ENCODE measurements at regions of chr16 and their contacts with region 1.

Region 1: GRCh38 chr16:24253192-24253591 is 2.9 kb upstream of the CACNG3 start:
- DNase-seq: peak; percentile 71
- ATAC-seq: peak; percentile 66
- H3K4me3 ChIP-seq: no peak overlapping the region
- H3K4me3 Mint-ChIP-seq: no peak overlapping the region
- H3K27ac ChIP-seq: no peak overlapping the region
- H3K27ac Mint-ChIP-seq: no peak overlapping the region
- H3K4me1 ChIP-seq: no peaks in the 10 kb centered on the region
- H3K4me1 Mint-ChIP-seq: peaks cover 6% of the 10 kb centered on the region
- H3K27me3 ChIP-seq: peaks cover 0 to 44% (median 39%) of the 10 kb centered on the region in 4 experiments
- H3K27me3 Mint-ChIP-seq: peaks cover 51% of the 10 kb centered on the region
- CTCF ChIP-seq: peak; percentile 85

Region 2: GRCh38 chr16:23729503-23730424 is 523.4 kb before region 1 on chr16:
- CTCF ChIA-PET with region 1: interaction called, 59 read pairs
- POLR2A ChIA-PET with region 1: no interaction called
- intact Hi-C with region 1: no loop called
- DNase-seq: no peak
- ATAC-seq: no peak
- H3K4me3 ChIP-seq: no peak overlapping the region
- H3K4me3 Mint-ChIP-seq: no peak overlapping the region
- H3K27ac ChIP-seq: no peak overlapping the region
- H3K27ac Mint-ChIP-seq: no peak overlapping the region
- H3K4me1 ChIP-seq: peaks cover 0 to 5% of the 10 kb centered on the region in 2 donors
- H3K4me1 Mint-ChIP-seq: peaks cover 3% of the 10 kb centered on the region
- H3K27me3 ChIP-seq: peaks cover 0 to 6% (median 0%) of the 10 kb centered on the region in 4 experiments
- H3K27me3 Mint-ChIP-seq: peaks cover 15% of the 10 kb centered on the region
- CTCF ChIP-seq: no peak

Region 3: DNA sequence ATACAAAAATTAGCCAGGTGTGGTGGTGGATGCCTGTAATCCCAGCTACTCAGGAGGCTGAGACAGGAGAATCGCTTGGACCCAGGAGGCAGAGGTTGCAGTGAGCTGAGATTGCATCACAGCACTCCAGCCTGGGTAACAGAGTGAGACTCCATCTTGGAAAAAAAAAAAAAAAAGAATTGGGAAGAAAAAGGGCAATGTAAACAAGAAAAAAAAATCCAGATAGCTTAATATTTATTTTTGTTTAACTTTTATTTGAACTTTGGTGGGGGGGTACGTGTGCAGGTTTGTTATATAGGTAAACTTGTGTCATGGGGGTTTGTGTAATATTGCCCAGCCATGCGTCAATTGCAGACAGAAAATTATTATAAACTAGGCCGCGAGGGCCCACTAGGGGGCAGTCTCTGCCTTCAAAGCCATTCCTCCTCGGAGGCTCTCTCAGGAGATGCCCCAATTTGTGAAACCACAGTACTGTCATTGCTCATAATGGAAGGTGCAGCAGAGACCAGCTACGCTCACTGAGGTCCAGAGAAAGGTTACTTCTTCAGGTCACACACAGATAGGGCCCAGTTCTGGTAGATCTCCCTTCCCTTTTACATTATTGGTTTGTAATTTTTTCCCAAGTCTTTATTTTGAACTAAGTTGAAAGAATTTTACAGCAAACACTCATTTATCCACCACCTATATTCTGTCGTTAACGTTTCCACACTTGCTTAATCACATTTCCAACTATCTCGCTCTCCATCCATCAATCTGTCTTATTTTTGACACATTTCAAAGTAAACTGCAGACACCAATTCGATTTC is 211.2 kb before region 1 on chr16:
- CTCF ChIA-PET with region 1: interaction called, 125 read pairs
- POLR2A ChIA-PET with region 1: no interaction called
- intact Hi-C with region 1: loop called (anchors 1 kb)
- DNase-seq: peak; percentile 79
- ATAC-seq: peak; percentile 76
- H3K4me3 ChIP-seq: no peak overlapping the region
- H3K4me3 Mint-ChIP-seq: no peak overlapping the region
- H3K27ac ChIP-seq: peak overlapping the region in 1 of 2 donors; percentile 34
- H3K27ac Mint-ChIP-seq: peak overlapping the region; percentile 10
- H3K4me1 ChIP-seq: no peaks in the 10 kb centered on the region
- H3K4me1 Mint-ChIP-seq: peaks cover 14% of the 10 kb centered on the region
- H3K27me3 ChIP-seq: no peaks in the 10 kb centered on the region
- H3K27me3 Mint-ChIP-seq: no peaks in the 10 kb centered on the region
- CTCF ChIP-seq: peak; percentile 87

Region 4: DNA sequence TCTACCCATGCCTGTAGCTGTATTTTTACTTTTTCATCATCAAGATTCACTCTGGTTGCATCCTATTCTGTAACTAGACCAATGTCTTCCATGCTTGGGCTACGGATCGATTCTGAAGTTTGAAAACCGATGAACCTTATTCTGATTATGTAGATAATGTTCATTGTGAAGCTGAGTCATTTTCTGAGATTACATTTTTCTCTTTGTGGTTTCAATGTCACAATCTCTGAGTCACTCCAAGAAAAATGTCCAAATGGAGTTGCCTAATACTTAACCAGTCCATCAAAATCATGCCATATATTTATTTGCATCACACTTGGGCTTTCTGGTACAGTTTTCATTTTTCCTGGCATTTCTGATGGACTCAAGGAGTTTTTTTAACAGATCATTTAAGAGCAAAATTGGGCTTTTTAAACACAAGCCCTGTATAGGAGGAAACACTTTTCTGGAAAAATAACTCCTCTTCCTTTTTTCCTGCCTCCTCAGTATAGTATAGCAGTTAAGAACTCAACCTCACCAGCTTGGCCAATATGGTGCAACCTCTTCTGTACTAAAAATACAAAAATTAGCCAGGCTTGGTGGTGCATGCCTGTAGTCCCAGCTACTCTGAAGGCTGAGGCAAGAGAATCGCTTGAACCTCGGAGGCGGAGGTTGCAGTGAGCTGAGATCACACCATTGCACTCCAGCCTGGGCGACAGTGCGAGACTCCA is 20.4 kb after region 1 on chr16:
- CTCF ChIA-PET with region 1: interaction called, 12 read pairs
- POLR2A ChIA-PET with region 1: no interaction called
- intact Hi-C with region 1: no loop called
- DNase-seq: no peak
- ATAC-seq: no peak
- H3K4me3 ChIP-seq: no peak overlapping the region
- H3K4me3 Mint-ChIP-seq: no peak overlapping the region
- H3K27ac ChIP-seq: no peak overlapping the region
- H3K27ac Mint-ChIP-seq: no peak overlapping the region
- H3K4me1 ChIP-seq: no peaks in the 10 kb centered on the region
- H3K4me1 Mint-ChIP-seq: no peaks in the 10 kb centered on the region
- H3K27me3 ChIP-seq: peaks cover 0 to 12% (median 8%) of the 10 kb centered on the region in 4 experiments
- H3K27me3 Mint-ChIP-seq: peaks cover 58% of the 10 kb centered on the region
- CTCF ChIP-seq: no peak

Region 5: DNA sequence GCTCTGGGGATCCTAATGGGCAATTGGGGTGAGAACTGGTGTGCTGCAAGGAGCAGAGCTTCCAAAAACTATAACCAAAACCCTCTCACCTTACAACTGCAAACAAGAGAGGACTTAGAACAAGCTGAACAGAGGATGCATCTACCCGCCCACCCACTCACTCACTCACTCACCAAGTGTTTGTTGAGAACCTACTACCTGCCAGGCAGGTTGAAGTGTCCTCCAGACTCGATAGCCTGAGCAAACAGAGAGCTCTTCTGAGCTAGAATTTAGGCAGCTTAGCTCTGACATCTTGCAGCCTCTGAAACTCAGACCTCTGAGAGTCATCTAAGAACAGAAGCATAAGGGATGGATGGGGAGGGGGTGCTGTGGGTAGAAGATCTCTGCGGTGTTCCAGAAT is 44.2 kb after region 1 on chr16:
- CTCF ChIA-PET with region 1: no interaction called
- POLR2A ChIA-PET with region 1: no interaction called
- intact Hi-C with region 1: no loop called
- DNase-seq: no peak
- ATAC-seq: no peak
- H3K4me3 ChIP-seq: no peak overlapping the region
- H3K4me3 Mint-ChIP-seq: no peak overlapping the region
- H3K27ac ChIP-seq: no peak overlapping the region
- H3K27ac Mint-ChIP-seq: no peak overlapping the region
- H3K4me1 ChIP-seq: no peaks in the 10 kb centered on the region
- H3K4me1 Mint-ChIP-seq: no peaks in the 10 kb centered on the region
- H3K27me3 ChIP-seq: peaks cover 0 to 11% (median 0%) of the 10 kb centered on the region in 4 experiments
- H3K27me3 Mint-ChIP-seq: peaks cover 39% of the 10 kb centered on the region
- CTCF ChIP-seq: no peak